Activated B cell treated with CpG ODN at 0.5 μM for 24 hours (primary cell): ENCODE measurements at regions of chr14 and their contacts with region 1.

Region 1: GRCh38 chr14:63770187-63770807 is 42.4 kb upstream of the SGPP1 start:
- DNase-seq: no peak
- ATAC-seq: peak; percentile 83
- H3K4me3 Mint-ChIP-seq: no peak overlapping the region
- H3K27ac Mint-ChIP-seq: no peak overlapping the region
- H3K4me1 Mint-ChIP-seq: peaks cover 13% of the 10 kb centered on the region
- H3K27me3 Mint-ChIP-seq: no peaks in the 10 kb centered on the region
- CTCF ChIP-seq: peak; percentile 42

Region 2: GRCh38 chr14:63388763-63389431 is 381.4 kb before region 1 on chr14:
- CTCF ChIA-PET with region 1: interaction called, 35 read pairs
- POLR2A ChIA-PET with region 1: no interaction called
- intact Hi-C with region 1: loop called (anchors 1 kb)
- DNase-seq: peak; percentile 17
- ATAC-seq: peak; percentile 81
- H3K4me3 Mint-ChIP-seq: no peak overlapping the region
- H3K27ac Mint-ChIP-seq: no peak overlapping the region
- H3K4me1 Mint-ChIP-seq: peaks cover 3% of the 10 kb centered on the region
- H3K27me3 Mint-ChIP-seq: no peaks in the 10 kb centered on the region
- CTCF ChIP-seq: no peak

Region 3: DNA sequence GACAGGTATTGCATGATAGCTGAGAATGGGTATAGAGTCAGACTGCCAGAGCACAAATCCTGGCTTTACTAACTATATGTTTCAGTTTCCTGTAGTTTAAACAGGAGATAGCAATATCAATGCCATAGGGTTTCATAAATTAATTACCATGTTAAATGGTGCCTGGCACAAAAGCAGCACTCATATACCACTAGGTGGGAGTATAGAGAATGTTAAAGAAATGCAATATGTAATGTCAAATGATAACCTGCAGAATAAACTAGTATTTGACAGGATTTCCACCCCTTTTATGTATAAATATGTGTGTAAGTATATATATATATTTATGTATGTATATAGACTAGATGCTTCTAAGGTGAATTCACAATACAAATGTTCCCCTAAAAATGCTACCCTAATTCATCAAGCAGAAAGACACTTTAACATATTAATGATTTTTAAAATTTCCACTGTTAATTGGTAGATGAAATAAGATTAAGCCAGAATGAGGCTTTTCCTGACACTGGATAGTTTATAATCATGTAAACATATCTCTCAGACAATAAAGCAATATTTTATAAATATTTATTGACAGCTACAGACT is 137.3 kb before region 1 on chr14:
- CTCF ChIA-PET with region 1: interaction called, 67 read pairs
- POLR2A ChIA-PET with region 1: no interaction called
- intact Hi-C with region 1: loop called (anchors 1 kb)
- DNase-seq: no peak
- ATAC-seq: peak; percentile 80
- H3K4me3 Mint-ChIP-seq: no peak overlapping the region
- H3K27ac Mint-ChIP-seq: no peak overlapping the region
- H3K4me1 Mint-ChIP-seq: peaks cover 20% of the 10 kb centered on the region
- H3K27me3 Mint-ChIP-seq: no peaks in the 10 kb centered on the region
- CTCF ChIP-seq: no peak

Region 4: GRCh38 chr14:63727774-63728728 is 42.2 kb before region 1 on chr14 and contains the start of gene SGPP1:
- CTCF ChIA-PET with region 1: interaction called, 51 read pairs
- POLR2A ChIA-PET with region 1: interaction called, 8 read pairs
- intact Hi-C with region 1: loop called (anchors 1 kb)
- DNase-seq: peak; percentile 82
- ATAC-seq: peak; percentile 91
- H3K4me3 Mint-ChIP-seq: peak within 1 kb of the TSS; percentile 99
- H3K27ac Mint-ChIP-seq: peak within 1 kb of the TSS; percentile 96
- H3K4me1 Mint-ChIP-seq: peaks cover 42% of the 10 kb centered on the region
- H3K27me3 Mint-ChIP-seq: no peaks in the 10 kb centered on the region
- CTCF ChIP-seq: no peak
- total RNA-seq, gene SGPP1: 20.9 and 21.2 TPM in 2 replicates

Region 5: DNA sequence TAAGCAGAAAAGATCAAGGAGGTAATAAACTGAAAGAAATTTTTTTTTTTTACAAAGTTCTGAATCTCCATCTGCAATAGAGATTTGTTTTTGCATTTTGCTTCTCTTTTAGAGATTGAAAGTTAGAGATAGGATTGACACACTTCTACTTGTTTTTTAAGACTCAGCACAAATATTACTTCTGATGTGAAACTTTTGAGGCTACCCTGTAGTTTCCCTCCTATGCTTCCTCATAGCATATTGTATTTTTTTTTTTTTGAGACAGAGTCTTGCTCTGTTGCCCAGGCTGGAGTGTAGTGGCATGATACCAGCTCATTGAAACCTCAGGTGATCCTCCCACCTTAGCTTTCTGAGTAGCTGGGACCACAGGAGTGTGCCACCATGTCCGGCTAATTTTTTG is 10.3 kb before region 1 on chr14:
- CTCF ChIA-PET with region 1: interaction called, 15 read pairs
- POLR2A ChIA-PET with region 1: no interaction called
- intact Hi-C with region 1: no loop called
- DNase-seq: no peak
- ATAC-seq: peak; percentile 71
- H3K4me3 Mint-ChIP-seq: peak overlapping the region; percentile 61
- H3K27ac Mint-ChIP-seq: peak overlapping the region; percentile 83
- H3K4me1 Mint-ChIP-seq: peaks cover 10% of the 10 kb centered on the region
- H3K27me3 Mint-ChIP-seq: no peaks in the 10 kb centered on the region
- CTCF ChIP-seq: no peak